ENCODE measurements at regions of chr6 and their contacts with region 1.

Region 1: GRCh38 chr6:163554663-163555062 is 140.1 kb downstream of the QKI start:
- DNase-seq: peak; percentile 81
- H3K4me3 Mint-ChIP-seq: no peak overlapping the region
- H3K27ac Mint-ChIP-seq: no peak overlapping the region
- H3K4me1 Mint-ChIP-seq: peaks cover 7% of the 10 kb centered on the region
- H3K27me3 Mint-ChIP-seq: no peaks in the 10 kb centered on the region

Region 2: GRCh38 chr6:162907876-162908481 is 646.7 kb before region 1 on chr6:
- CTCF ChIA-PET with region 1: no interaction called
- intact Hi-C with region 1: loop called (anchors 5 kb)
- DNase-seq: no peak
- H3K4me3 Mint-ChIP-seq: no peak overlapping the region
- H3K27ac Mint-ChIP-seq: no peak overlapping the region
- H3K4me1 Mint-ChIP-seq: no peaks in the 10 kb centered on the region
- H3K27me3 Mint-ChIP-seq: peaks cover 5% of the 10 kb centered on the region

Region 3: GRCh38 chr6:163170294-163170883 is 384.3 kb before region 1 on chr6:
- CTCF ChIA-PET with region 1: interaction called, 5 read pairs
- intact Hi-C with region 1: loop called (anchors 1 kb)
- DNase-seq: peak; percentile 33
- H3K4me3 Mint-ChIP-seq: no peak overlapping the region
- H3K27ac Mint-ChIP-seq: no peak overlapping the region
- H3K4me1 Mint-ChIP-seq: no peaks in the 10 kb centered on the region
- H3K27me3 Mint-ChIP-seq: peaks cover 7% of the 10 kb centered on the region

Region 4: DNA sequence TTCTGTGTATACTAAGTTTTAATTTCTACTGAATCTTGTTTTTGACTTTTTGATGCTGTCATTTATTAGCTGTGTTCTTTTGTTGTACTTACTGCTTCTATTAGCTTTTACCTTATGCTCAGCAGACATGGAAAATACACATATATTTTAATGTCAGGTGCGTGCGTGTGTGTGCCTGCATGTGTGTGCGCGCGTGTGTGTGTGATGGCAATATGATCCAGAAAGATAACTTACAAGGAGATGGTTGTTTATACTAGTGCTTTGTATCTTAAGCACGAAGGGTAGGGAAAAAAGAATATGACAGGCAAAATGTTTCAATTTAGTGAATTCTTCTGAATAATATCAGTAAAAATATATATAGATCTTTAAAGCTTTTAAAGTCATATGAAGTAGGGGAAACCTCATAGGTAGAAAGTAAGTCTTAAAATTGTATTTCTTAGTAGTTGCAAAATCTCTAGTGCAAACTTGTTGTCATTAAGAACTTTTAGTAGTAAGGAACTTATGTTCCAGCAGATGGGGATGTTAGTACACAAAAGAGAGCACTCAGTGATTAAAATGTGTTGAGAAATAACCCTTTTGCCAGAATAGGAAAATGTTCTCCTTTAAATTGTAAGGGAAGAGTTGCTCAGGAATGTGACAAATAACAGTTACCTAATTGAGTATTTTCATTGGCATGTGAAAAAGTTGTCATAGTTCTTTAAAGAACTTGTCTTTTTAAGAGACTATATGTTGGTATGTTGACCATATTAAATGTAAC is 127.0 kb before region 1 on chr6:
- CTCF ChIA-PET with region 1: interaction called, 3 read pairs
- intact Hi-C with region 1: loop called (anchors 1 kb)
- DNase-seq: no peak
- H3K4me3 Mint-ChIP-seq: no peak overlapping the region
- H3K27ac Mint-ChIP-seq: no peak overlapping the region
- H3K4me1 Mint-ChIP-seq: peaks cover 41% of the 10 kb centered on the region
- H3K27me3 Mint-ChIP-seq: no peaks in the 10 kb centered on the region

Region 5: GRCh38 chr6:164927288-164928056 is 1372.8 kb after region 1 on chr6:
- CTCF ChIA-PET with region 1: no interaction called
- intact Hi-C with region 1: loop called (anchors 5 kb)
- DNase-seq: peak; percentile 61
- H3K4me3 Mint-ChIP-seq: no peak overlapping the region
- H3K27ac Mint-ChIP-seq: no peak overlapping the region
- H3K4me1 Mint-ChIP-seq: no peaks in the 10 kb centered on the region
- H3K27me3 Mint-ChIP-seq: no peaks in the 10 kb centered on the region

Measured in activated naive CD4-positive, alpha-beta T cell treated with anti-CD3 and anti-CD28 coated beads for 36 hours (primary cell).